Spleen (tissue), 13 donors: ENCODE measurements at regions of chr4 and their contacts with region 1.

Region 1: GRCh38 chr4:98467627-98468072 is 190.8 kb downstream of the TSPAN5 start:
- DNase-seq: peak; percentile 87
- H3K4me3 ChIP-seq: peak overlapping the region in 6 of 8 donors; percentile 1 to 65 (median 24)
- H3K27ac ChIP-seq: peak overlapping the region in 4 of 8 donors; percentile 26 to 54 (median 38)
- H3K4me1 ChIP-seq: peaks cover 0 to 42% (median 19%) of the 10 kb centered on the region in 6 donors
- H3K27me3 ChIP-seq: no peaks in the 10 kb centered on the region
- CTCF ChIP-seq: peak; percentile 55 to 88 (median 78)
- POLR2A ChIP-seq: no peak

Region 2: GRCh38 chr4:98617358-98618244 is 150.0 kb after region 1 on chr4:
- intact Hi-C with region 1: no loop called
- DNase-seq: no peak
- H3K4me3 ChIP-seq: no peak overlapping the region
- H3K27ac ChIP-seq: peak overlapping the region in 6 of 8 donors; percentile 13 to 53 (median 44)
- H3K4me1 ChIP-seq: peaks cover 0 to 35% (median 15%) of the 10 kb centered on the region in 6 donors
- H3K27me3 ChIP-seq: no peaks in the 10 kb centered on the region
- CTCF ChIP-seq: no peak
- POLR2A ChIP-seq: no peak

Region 3: GRCh38 chr4:98658287-98659105 is 190.8 kb after region 1 on chr4 and contains the start of gene TSPAN5:
- intact Hi-C with region 1: loop called (anchors 10 kb)
- DNase-seq: peak; percentile 96
- H3K4me3 ChIP-seq: peak within 1 kb of the TSS; percentile 68 to 87 (median 80)
- H3K27ac ChIP-seq: peak within 1 kb of the TSS; percentile 61 to 89 (median 83)
- H3K4me1 ChIP-seq: peaks cover 12 to 78% (median 44%) of the 10 kb centered on the region in 6 donors
- H3K27me3 ChIP-seq: peaks cover 0 to 26% (median 0%) of the 10 kb centered on the region in 7 donors
- CTCF ChIP-seq: peak in 1 of 11 experiments; percentile 5
- POLR2A ChIP-seq: peak in 2 of 3 donors; percentile 21 to 59
- total RNA-seq, gene TSPAN5: 14.9 to 33.6 (median 25.7) TPM

Region 4: GRCh38 chr4:98928505-98929340 is 461.1 kb after region 1 on chr4 and contains the start of gene EIF4E:
- intact Hi-C with region 1: loop called (anchors 10 kb)
- DNase-seq: peak; percentile 98
- H3K4me3 ChIP-seq: peak within 1 kb of the TSS; percentile 89 to 100 (median 96)
- H3K27ac ChIP-seq: peak within 1 kb of the TSS; percentile 85 to 97 (median 96)
- H3K4me1 ChIP-seq: peaks cover 25 to 74% (median 56%) of the 10 kb centered on the region in 6 donors
- H3K27me3 ChIP-seq: no peaks in the 10 kb centered on the region
- CTCF ChIP-seq: peak in 6 of 11 experiments; percentile 10 to 44 (median 24)
- POLR2A ChIP-seq: peak in 1 of 3 donors; percentile 9
- total RNA-seq, gene EIF4E: 59.5 to 86.5 (median 69.4) TPM

Region 5: GRCh38 chr4:99058228-99058627 is 590.6 kb after region 1 on chr4:
- intact Hi-C with region 1: loop called (anchors 5 kb)
- DNase-seq: no peak
- H3K4me3 ChIP-seq: no peak overlapping the region
- H3K27ac ChIP-seq: no peak overlapping the region
- H3K4me1 ChIP-seq: peaks cover 0 to 15% (median 6%) of the 10 kb centered on the region in 6 donors
- H3K27me3 ChIP-seq: no peaks in the 10 kb centered on the region
- CTCF ChIP-seq: no peak
- POLR2A ChIP-seq: no peak

Region 6: GRCh38 chr4:99405433-99406115 is 937.9 kb after region 1 on chr4:
- intact Hi-C with region 1: loop called (anchors 5 kb)
- DNase-seq: no peak
- H3K4me3 ChIP-seq: no peak overlapping the region
- H3K27ac ChIP-seq: peak overlapping the region in 5 of 8 donors; percentile 29 to 55 (median 41)
- H3K4me1 ChIP-seq: peaks cover 0 to 19% (median 0%) of the 10 kb centered on the region in 6 donors
- H3K27me3 ChIP-seq: no peaks in the 10 kb centered on the region
- CTCF ChIP-seq: peak; percentile 74 to 97 (median 90)
- POLR2A ChIP-seq: peak in 1 of 3 donors; percentile 11